Activated CD4-positive, alpha-beta T cell treated with anti-CD3 and anti-CD28 coated beads, Interleukin-2, amount 10 ng/mL, durations not matched to agents 24 days and 14 days (primary cell): ENCODE measurements at regions of chr20 and their contacts with region 1.

Region 1: GRCh38 chr20:25223179-25223661 is 24.7 kb upstream of the PYGB start:
- DNase-seq: peak; percentile 69
- H3K4me3 Mint-ChIP-seq: no peak overlapping the region
- H3K27ac Mint-ChIP-seq: peak overlapping the region; percentile 81
- H3K4me1 Mint-ChIP-seq: peaks cover 9% of the 10 kb centered on the region
- H3K27me3 Mint-ChIP-seq: no peaks in the 10 kb centered on the region

Region 2: GRCh38 chr20:25076731-25077609 is 146.2 kb before region 1 on chr20:
- intact Hi-C with region 1: no loop called
- DNase-seq: no peak
- H3K4me3 Mint-ChIP-seq: no peak overlapping the region
- H3K27ac Mint-ChIP-seq: no peak overlapping the region
- H3K4me1 Mint-ChIP-seq: peaks cover 5% of the 10 kb centered on the region
- H3K27me3 Mint-ChIP-seq: peaks cover 77% of the 10 kb centered on the region

Region 3: GRCh38 chr20:25237610-25238318 is 14.5 kb after region 1 on chr20:
- intact Hi-C with region 1: loop called (anchors 1 kb)
- DNase-seq: peak; percentile 81
- H3K4me3 Mint-ChIP-seq: peak overlapping the region; percentile 55
- H3K27ac Mint-ChIP-seq: peak overlapping the region; percentile 91
- H3K4me1 Mint-ChIP-seq: peaks cover 22% of the 10 kb centered on the region
- H3K27me3 Mint-ChIP-seq: peaks cover under 1% of the 10 kb centered on the region

Region 4: DNA sequence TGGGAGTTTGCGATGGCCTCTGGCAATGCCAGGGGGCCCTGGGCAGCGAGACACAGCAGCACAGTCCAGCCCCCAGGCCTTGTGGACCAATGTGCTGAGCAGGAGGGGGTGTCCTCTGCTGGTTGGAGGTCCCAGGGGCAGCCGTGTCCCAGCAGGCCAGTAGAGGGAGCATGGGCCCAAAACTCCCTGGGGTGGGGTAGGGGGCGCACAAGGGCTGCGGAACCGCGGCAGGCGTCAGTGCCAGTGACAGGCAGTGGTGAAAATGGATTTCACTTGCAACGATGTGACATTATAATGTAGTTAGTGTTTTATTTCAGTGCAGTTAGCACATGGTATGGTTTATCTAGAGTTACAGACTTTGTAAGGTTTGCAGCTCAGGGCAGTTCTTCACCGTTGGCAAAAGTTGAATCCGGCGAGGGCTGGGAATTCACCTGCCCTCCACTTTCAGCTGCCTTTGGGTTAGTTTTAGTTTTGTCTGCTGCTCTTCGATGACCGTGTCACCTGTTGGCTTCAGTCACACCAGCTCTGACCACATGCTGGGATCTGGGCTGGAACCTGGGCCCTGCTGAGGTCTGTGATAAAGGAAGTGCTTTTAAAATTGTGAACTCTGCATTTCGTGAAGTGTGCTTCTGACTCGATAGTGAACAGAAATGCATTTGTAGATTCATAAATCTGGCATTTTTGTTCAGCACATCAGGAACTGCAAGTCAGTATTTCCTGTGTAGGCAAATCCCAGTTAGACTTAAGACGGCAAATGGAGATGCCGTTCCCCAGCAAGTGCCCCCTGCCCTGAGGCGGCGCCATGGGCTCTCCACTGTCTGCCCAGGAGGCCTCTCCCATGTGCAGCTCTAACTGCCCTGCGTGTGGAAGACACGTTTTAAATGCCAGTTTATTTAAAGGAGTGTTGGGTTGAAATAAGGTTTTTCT is 71.5 kb after region 1 on chr20:
- intact Hi-C with region 1: no loop called
- DNase-seq: peak; percentile 86
- H3K4me3 Mint-ChIP-seq: no peak overlapping the region
- H3K27ac Mint-ChIP-seq: no peak overlapping the region
- H3K4me1 Mint-ChIP-seq: no peaks in the 10 kb centered on the region
- H3K27me3 Mint-ChIP-seq: no peaks in the 10 kb centered on the region

Region 5: DNA sequence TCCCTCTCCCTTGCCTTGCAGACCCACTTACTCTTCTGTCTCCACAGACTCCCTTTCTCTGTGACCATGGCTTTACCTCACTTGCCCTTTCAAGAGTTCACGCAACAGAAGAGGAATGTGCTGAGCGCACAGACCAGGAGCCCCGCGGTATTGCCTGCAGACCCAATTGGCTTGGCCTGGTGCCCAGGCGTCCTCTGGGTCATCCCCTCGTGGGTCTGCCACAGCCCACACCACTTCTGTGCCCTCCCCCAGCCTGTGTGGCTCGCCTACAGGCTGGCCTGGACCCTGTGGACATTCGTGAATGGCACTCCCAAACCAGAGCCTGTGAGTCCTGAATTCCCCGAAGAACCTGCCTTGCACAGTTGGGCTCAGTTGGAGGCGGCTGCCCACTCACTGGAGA is 377.4 kb after region 1 on chr20:
- intact Hi-C with region 1: no loop called
- DNase-seq: no peak
- H3K4me3 Mint-ChIP-seq: no peak overlapping the region
- H3K27ac Mint-ChIP-seq: no peak overlapping the region
- H3K4me1 Mint-ChIP-seq: peaks cover 5% of the 10 kb centered on the region
- H3K27me3 Mint-ChIP-seq: peaks cover 4% of the 10 kb centered on the region